Sigmoid colon (tissue), 7 donors: ENCODE measurements at regions of chr14 and their contacts with region 1.

Region 1: GRCh38 chr14:64720131-64720576 is 15.9 kb downstream of the PLEKHG3 start:
- DNase-seq: peak; percentile 64
- H3K4me3 ChIP-seq: no peak overlapping the region
- H3K27ac ChIP-seq: peak overlapping the region; percentile 61 to 90 (median 86)
- H3K4me1 ChIP-seq: peaks cover 0 to 100% (median 98%) of the 10 kb centered on the region in 4 donors
- H3K27me3 ChIP-seq: no peaks in the 10 kb centered on the region
- CTCF ChIP-seq: no peak
- EP300 ChIP-seq: no peak
- POLR2A ChIP-seq: no peak

Region 2: DNA sequence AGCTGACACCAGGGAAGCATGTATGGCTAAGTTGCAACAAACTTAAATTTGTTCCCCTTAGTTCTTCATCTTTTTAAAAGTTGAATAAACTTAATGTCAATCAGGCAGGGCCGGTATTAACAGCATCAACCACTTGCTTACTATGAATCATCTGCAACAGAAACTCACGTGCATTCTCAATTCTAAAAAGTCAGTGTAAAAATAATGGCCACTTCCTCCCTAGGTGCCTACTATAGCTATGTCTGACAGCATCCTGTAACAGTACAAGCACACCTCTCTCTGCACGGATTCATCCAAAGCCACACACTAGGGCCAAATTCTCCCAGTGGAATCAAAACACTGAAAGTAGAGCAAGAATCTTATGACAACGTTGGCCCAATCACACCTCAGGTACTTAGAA is 121.8 kb before region 1 on chr14:
- intact Hi-C with region 1: no loop called
- DNase-seq: no peak
- H3K4me3 ChIP-seq: no peak overlapping the region
- H3K27ac ChIP-seq: no peak overlapping the region
- H3K4me1 ChIP-seq: no peaks in the 10 kb centered on the region
- H3K27me3 ChIP-seq: no peaks in the 10 kb centered on the region
- CTCF ChIP-seq: no peak
- EP300 ChIP-seq: no peak
- POLR2A ChIP-seq: no peak

Region 3: GRCh38 chr14:64681796-64682710 is 38.1 kb before region 1 on chr14:
- intact Hi-C with region 1: loop called (anchors 2 kb)
- DNase-seq: peak; percentile 88
- H3K4me3 ChIP-seq: no peak overlapping the region
- H3K27ac ChIP-seq: peak overlapping the region; percentile 83 to 90 (median 87)
- H3K4me1 ChIP-seq: peaks cover 0 to 50% (median 47%) of the 10 kb centered on the region in 4 donors
- H3K27me3 ChIP-seq: no peaks in the 10 kb centered on the region
- CTCF ChIP-seq: no peak
- EP300 ChIP-seq: peak in 2 of 4 donors; percentile 13 to 74
- POLR2A ChIP-seq: peak in 1 of 2 donors; percentile 30

Region 4: DNA sequence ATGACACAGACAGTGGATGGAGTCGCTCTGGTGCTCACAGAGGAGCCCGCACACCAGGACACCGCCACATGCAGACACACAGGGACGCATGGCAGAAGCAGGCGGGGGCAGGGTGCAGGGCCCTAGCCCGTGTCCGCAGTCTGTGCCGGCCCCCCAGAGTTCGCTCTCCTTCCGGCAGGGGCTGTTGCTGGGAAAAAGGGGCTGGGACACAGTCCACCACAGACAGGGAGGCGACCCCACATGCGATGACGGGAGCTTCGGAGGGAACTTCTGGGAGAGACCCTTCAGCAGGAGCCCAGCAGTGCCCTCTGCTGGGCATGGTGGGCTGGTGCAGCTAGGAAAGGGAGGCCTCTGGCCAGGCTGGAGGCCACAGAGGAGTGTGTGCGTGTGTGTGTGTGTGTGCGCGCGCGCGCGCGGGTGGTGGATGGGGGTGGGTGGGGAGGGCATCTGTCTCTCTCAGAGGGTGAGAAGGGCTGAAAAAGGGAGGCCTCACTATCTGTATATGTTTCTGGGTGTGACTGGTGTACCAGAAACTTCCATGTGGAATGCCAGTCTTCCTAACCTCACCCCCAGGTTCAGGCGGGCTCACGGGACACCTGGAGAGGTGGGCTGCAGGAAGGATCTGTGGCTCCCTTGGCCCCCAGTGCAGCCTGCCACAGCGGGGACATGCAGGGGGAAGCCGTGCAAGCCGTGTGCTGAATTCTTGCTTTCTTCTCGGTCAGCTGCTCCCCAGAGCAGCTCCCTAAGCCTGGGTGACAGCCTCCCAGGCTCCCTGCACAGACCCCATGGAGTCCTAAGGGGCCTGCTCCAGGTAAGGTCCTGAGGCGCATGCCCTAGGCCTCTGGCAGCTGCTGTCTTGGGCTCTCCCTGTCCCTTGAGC is 44.7 kb after region 1 on chr14:
- intact Hi-C with region 1: loop called (anchors 2 kb)
- DNase-seq: peak; percentile 85
- H3K4me3 ChIP-seq: peak overlapping the region in 3 of 4 donors; percentile 30 to 42 (median 34)
- H3K27ac ChIP-seq: peak overlapping the region in 3 of 4 donors; percentile 67 to 86 (median 78)
- H3K4me1 ChIP-seq: peaks cover 0 to 52% (median 44%) of the 10 kb centered on the region in 4 donors
- H3K27me3 ChIP-seq: no peaks in the 10 kb centered on the region
- CTCF ChIP-seq: peak; percentile 92 to 96 (median 94)
- EP300 ChIP-seq: no peak
- POLR2A ChIP-seq: no peak

Region 5: DNA sequence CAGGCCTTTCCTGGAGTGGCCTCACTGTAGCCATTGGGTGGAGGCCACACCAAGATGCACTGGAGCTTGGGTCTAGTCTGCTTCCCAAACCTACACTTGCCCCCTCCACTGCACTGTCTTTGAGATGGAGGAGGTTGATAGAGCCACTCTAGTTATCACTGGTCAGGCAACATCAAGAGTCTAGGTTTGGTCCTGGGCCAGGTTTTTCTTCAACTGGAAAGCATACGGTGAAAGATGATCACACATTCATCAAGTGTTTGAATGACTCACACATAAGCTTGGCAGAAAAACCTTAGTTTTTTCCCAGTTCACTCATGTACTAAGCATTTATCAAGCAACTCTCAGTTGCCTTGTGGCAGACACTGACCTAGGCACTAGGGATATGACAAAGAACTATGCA is 68.5 kb after region 1 on chr14:
- intact Hi-C with region 1: no loop called
- DNase-seq: no peak
- H3K4me3 ChIP-seq: no peak overlapping the region
- H3K27ac ChIP-seq: no peak overlapping the region
- H3K4me1 ChIP-seq: no peaks in the 10 kb centered on the region
- H3K27me3 ChIP-seq: no peaks in the 10 kb centered on the region
- CTCF ChIP-seq: no peak
- EP300 ChIP-seq: no peak
- POLR2A ChIP-seq: no peak

Region 6: DNA sequence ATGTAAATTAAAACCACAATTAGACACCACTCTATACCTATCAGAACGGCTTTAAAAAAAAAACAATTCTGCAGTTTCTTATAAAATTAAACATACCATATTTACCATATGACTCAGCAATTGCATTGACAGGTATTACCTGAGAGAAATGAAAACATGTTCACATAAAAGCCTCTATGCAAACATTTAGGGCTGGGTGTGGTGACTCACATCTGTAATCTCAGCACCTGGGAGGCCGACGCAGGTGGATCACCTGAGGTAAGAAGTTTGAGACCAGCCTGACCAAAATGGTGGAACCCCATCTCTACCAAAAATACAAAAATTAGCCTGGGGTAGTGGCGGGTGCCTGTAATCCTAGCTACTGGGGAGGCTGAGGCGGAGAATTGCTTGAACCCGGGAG is 118.5 kb after region 1 on chr14:
- intact Hi-C with region 1: no loop called
- DNase-seq: no peak
- H3K4me3 ChIP-seq: no peak overlapping the region
- H3K27ac ChIP-seq: no peak overlapping the region
- H3K4me1 ChIP-seq: no peaks in the 10 kb centered on the region
- H3K27me3 ChIP-seq: peaks cover 0 to 15% (median 7%) of the 10 kb centered on the region in 3 donors
- CTCF ChIP-seq: no peak
- EP300 ChIP-seq: no peak
- POLR2A ChIP-seq: no peak

Region 7: DNA sequence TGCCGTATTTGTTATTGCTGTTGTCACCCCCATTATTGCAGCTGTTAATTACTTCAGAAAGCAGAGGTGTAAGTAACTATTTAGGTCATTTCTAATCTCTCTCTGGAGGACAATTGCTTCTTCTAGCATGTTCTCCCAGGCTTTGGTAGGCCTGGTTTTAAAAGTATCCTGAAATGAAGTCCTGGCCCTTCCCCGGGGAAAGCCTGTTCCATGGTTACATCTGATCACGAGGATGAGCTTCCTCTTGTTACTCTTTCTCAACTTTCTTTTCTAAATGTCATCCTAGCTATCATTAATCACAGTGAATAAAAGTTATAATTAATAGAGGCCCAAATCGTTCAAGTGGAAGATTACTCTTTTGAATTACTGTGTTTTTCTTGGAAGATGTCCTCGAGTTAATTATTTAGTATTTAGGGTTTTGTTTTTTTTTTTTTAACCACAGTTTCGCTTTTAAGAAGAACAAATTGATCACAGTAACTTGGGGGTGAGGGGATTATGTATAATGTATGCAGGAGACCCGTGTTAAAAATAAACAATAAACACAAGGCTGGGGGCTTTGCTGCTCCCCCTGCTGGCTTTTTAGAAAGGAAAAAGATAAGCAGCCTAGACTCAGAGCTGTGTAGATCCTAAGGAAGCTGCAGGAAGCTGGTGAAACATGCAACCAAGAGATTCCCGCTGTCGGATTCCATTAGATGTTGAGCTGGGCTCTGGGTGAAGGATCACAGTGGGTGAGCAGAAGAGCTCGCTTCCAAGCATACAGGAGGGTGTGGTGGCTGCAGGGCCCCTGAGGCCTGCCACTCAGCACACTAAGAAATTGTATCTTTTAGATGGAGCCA is 1112.5 kb after region 1 on chr14:
- intact Hi-C with region 1: no loop called
- DNase-seq: no peak
- H3K4me3 ChIP-seq: no peak overlapping the region
- H3K27ac ChIP-seq: no peak overlapping the region
- H3K4me1 ChIP-seq: no peaks in the 10 kb centered on the region
- H3K27me3 ChIP-seq: no peaks in the 10 kb centered on the region
- CTCF ChIP-seq: no peak
- EP300 ChIP-seq: no peak
- POLR2A ChIP-seq: no peak